Mammary epithelial cell (primary cell): ENCODE measurements at regions of chr3 and their contacts with region 1.

Region 1: DNA sequence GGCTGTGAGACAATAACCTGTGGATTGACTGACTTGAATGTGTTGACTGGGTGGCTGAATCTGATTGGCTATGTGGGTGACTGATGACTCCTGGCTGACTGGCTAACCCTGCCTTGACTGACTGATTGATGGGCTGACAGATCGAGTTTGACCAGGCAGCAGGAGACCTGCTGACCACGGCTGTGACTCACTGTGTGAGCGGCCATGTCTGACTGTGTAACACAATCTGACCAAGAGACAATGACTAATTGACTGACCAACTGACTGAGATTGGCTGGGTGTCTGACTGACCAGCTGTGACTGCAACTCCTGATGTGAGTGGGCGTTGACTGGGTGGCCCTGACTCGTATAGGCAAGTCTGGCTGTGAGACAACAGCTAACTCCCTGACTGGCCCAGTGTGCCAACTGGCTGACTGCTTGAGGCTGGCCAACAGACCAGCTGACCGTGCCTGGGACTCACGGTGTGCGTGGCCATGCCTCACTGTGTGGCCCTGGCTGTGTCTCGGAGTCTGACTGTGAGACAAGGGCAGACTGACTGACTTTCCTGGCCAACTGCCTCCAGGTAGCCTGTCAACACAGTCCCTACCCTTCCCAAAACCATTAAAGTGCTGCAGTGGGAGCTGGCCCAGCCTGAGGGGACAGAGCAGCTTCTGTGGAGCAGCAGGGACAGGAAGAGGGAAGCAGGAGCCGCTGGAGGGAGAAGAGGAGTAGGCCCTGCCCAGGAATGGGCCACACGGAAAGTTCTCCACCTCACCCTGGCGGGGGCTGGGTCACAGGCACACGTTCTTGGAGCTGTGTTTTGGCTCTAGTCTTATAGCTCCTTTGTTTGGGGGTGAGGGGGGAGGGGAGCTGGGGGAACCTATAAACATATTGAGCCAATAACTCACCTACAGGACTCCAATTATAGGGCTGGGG is 508.9 kb downstream of the SHQ1 start:
- DNase-seq: peak; percentile 98
- H3K4me3 ChIP-seq: no peak overlapping the region
- H3K27ac ChIP-seq: peak overlapping the region; percentile 72
- H3K4me1 ChIP-seq: peaks cover 41% of the 10 kb centered on the region
- H3K27me3 ChIP-seq: no peaks in the 10 kb centered on the region
- CTCF ChIP-seq: no peak

Region 2: GRCh38 chr3:71978150-71978721 is 361.1 kb before region 1 on chr3:
- CTCF ChIA-PET with region 1: no interaction called
- dilution Hi-C with region 1: no loop called
- in situ Hi-C with region 1: loop called in 1 of 2 experiments (anchors 5 kb)
- intact Hi-C with region 1: loop called (anchors 5 kb)
- DNase-seq: no peak
- H3K4me3 ChIP-seq: no peak overlapping the region
- H3K27ac ChIP-seq: no peak overlapping the region
- H3K4me1 ChIP-seq: peaks cover 22% of the 10 kb centered on the region
- H3K27me3 ChIP-seq: no peaks in the 10 kb centered on the region
- CTCF ChIP-seq: no peak

Region 3: GRCh38 chr3:72123908-72124441 is 215.4 kb before region 1 on chr3:
- CTCF ChIA-PET with region 1: no interaction called
- dilution Hi-C with region 1: no loop called
- in situ Hi-C with region 1: no loop called
- intact Hi-C with region 1: loop called (anchors 5 kb)
- DNase-seq: peak; percentile 99
- H3K4me3 ChIP-seq: no peak overlapping the region
- H3K27ac ChIP-seq: peak overlapping the region; percentile 20
- H3K4me1 ChIP-seq: peaks cover 13% of the 10 kb centered on the region
- H3K27me3 ChIP-seq: no peaks in the 10 kb centered on the region
- CTCF ChIP-seq: no peak

Region 4: GRCh38 chr3:72255791-72256559 is 83.4 kb before region 1 on chr3:
- CTCF ChIA-PET with region 1: no interaction called
- dilution Hi-C with region 1: loop called (anchors 5 kb)
- in situ Hi-C with region 1: no loop called
- intact Hi-C with region 1: no loop called
- DNase-seq: peak; percentile 23
- H3K4me3 ChIP-seq: no peak overlapping the region
- H3K27ac ChIP-seq: no peak overlapping the region
- H3K4me1 ChIP-seq: peaks cover 3% of the 10 kb centered on the region
- H3K27me3 ChIP-seq: peaks cover 16% of the 10 kb centered on the region
- CTCF ChIP-seq: peak in 1 of 2 donors; percentile 44

Region 5: DNA sequence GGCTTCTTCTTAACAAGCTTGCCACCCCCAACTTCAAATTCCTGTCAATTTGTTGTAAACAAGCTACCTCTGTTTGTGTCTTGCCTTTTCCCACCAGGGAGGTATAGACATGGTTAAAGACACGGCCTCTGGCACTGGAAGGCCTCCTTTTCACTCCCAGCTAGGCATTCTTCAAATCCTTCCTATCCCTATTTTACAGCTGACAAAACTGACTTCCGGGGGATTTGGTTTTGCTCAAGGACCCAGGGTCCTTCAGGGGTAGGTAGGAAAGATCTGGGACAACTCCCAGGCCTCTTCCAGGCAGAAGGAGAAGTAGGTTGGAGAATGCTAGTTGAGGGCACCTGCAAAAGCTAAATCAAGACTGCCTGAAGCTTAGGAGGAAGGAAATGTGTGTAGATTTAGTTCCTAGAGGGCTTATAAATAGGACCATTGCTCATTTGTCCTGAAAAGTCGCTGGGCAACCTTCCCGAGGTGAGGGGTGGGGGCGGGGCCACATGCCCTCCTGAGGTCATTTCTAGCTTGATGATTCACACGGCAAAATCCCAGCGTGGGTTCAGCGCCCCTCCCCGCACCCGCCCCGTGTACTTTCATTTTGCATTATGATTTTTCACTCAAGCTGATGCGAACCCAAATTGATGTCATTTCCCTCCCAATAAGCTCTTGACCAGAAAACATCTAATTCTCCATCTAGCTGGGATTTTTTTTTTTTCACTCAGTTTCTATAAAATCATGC is 143.4 kb after region 1 on chr3:
- CTCF ChIA-PET with region 1: no interaction called
- dilution Hi-C with region 1: no loop called
- in situ Hi-C with region 1: no loop called
- intact Hi-C with region 1: loop called (anchors 5 kb)
- DNase-seq: peak; percentile 76
- H3K4me3 ChIP-seq: peak overlapping the region; percentile 23 to 32 (median 29)
- H3K27ac ChIP-seq: peak overlapping the region; percentile 42
- H3K4me1 ChIP-seq: peaks cover 21% of the 10 kb centered on the region
- H3K27me3 ChIP-seq: no peaks in the 10 kb centered on the region
- CTCF ChIP-seq: no peak

Region 6: DNA sequence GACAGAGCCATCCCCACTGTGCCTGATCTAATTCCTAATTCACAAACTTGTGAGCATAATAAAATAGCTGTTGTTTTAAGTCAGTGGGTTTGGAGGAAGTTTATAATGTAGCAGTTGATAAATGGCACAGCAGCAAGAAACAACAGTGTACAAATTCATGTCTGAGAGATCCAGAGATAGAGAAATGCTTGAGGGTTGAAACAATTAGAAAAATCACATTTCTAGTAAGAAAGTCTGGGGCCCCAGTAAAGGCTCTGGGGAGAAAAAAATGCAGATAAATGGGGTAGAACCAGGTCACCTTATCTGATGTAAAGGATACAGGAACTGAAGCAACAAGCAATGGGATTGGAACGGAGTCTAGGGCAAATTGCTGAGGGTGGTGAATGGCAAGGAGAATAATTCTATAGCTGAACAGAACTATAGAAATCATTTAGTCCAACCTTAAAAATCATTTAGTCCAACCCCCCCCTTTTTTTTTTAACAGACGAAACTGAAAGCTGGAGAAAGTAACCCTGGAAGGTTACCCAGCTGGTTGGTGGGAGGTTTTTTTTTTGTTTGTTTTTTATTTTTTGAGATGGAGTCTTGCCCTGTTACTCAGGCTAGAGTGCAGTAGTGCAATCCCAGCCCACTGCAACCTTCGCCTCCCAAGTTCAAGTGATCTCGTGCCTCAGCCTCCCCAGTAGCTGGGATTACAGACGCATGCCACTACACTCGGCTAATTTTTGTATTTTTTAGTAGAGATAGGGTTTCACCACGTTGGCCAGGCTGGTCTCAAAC is 523.1 kb after region 1 on chr3:
- CTCF ChIA-PET with region 1: no interaction called
- dilution Hi-C with region 1: no loop called
- in situ Hi-C with region 1: no loop called
- intact Hi-C with region 1: no loop called
- DNase-seq: no peak
- H3K4me3 ChIP-seq: no peak overlapping the region
- H3K27ac ChIP-seq: no peak overlapping the region
- H3K4me1 ChIP-seq: no peaks in the 10 kb centered on the region
- H3K27me3 ChIP-seq: no peaks in the 10 kb centered on the region
- CTCF ChIP-seq: no peak